Aorta (tissue), 5 donors: ENCODE measurements at regions of chr22 and their contacts with region 1.

Region 1: GRCh38 chr22:36644333-36644757 is 59.2 kb downstream of the CACNG2 start:
- DNase-seq: no peak
- ATAC-seq: no peak
- H3K4me3 ChIP-seq: no peak overlapping the region
- H3K27ac ChIP-seq: no peak overlapping the region
- H3K4me1 ChIP-seq: no peaks in the 10 kb centered on the region
- H3K27me3 ChIP-seq: no peaks in the 10 kb centered on the region

Region 2: GRCh38 chr22:36699915-36700314 is 55.6 kb after region 1 on chr22:
- intact Hi-C with region 1: loop called in 1 of 2 experiments (anchors 10 kb)
- DNase-seq: no peak
- ATAC-seq: no peak
- H3K4me3 ChIP-seq: no peak overlapping the region
- H3K27ac ChIP-seq: no peak overlapping the region
- H3K4me1 ChIP-seq: no peaks in the 10 kb centered on the region
- H3K27me3 ChIP-seq: no peaks in the 10 kb centered on the region